Calu3 (cell line): ENCODE measurements at regions of chr4 and their contacts with region 1.

Region 1: GRCh38 chr4:170307182-170307581 is 217.4 kb upstream of the AADAT start:
- DNase-seq: no peak
- H3K4me3 Mint-ChIP-seq: no peak overlapping the region
- H3K27ac Mint-ChIP-seq: peak overlapping the region; percentile 82
- H3K4me1 Mint-ChIP-seq: peaks cover 40% of the 10 kb centered on the region
- H3K27me3 Mint-ChIP-seq: no peaks in the 10 kb centered on the region
- CTCF ChIP-seq: no peak

Region 2: GRCh38 chr4:170138580-170139194 is 168.5 kb before region 1 on chr4:
- CTCF ChIA-PET with region 1: no interaction called
- intact Hi-C with region 1: no loop called
- DNase-seq: peak; percentile 72
- H3K4me3 Mint-ChIP-seq: no peak overlapping the region
- H3K27ac Mint-ChIP-seq: no peak overlapping the region
- H3K4me1 Mint-ChIP-seq: peaks cover 6% of the 10 kb centered on the region
- H3K27me3 Mint-ChIP-seq: no peaks in the 10 kb centered on the region
- CTCF ChIP-seq: peak; percentile 49

Region 3: GRCh38 chr4:170270628-170271027 is 36.6 kb before region 1 on chr4:
- CTCF ChIA-PET with region 1: no interaction called
- intact Hi-C with region 1: loop called (anchors 5 kb)
- DNase-seq: no peak
- H3K4me3 Mint-ChIP-seq: no peak overlapping the region
- H3K27ac Mint-ChIP-seq: no peak overlapping the region
- H3K4me1 Mint-ChIP-seq: no peaks in the 10 kb centered on the region
- H3K27me3 Mint-ChIP-seq: no peaks in the 10 kb centered on the region
- CTCF ChIP-seq: no peak

Region 4: DNA sequence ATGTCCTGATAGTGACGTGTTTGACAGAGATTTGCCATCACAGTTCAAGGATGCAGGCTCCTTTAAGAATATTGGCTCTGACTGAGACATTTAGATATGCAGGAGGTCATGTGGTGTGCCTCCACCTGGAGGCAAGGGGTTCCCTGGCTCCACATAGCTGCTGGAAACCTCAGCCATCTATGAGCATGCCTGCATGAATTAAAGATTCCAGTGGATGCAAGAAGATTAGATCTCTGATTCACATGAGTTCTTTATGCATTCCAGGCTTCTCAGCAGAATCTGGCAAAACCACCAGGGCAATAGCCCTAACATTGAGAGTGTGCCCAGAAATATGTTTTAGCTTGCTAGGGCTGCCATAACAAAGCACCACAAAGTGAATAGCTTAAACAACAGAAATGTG is 81.1 kb after region 1 on chr4:
- CTCF ChIA-PET with region 1: no interaction called
- intact Hi-C with region 1: loop called (anchors 5 kb)
- DNase-seq: no peak
- H3K4me3 Mint-ChIP-seq: no peak overlapping the region
- H3K27ac Mint-ChIP-seq: no peak overlapping the region
- H3K4me1 Mint-ChIP-seq: peaks cover 15% of the 10 kb centered on the region
- H3K27me3 Mint-ChIP-seq: no peaks in the 10 kb centered on the region
- CTCF ChIP-seq: no peak

Region 5: GRCh38 chr4:170400361-170400760 is 93.2 kb after region 1 on chr4:
- CTCF ChIA-PET with region 1: no interaction called
- intact Hi-C with region 1: no loop called
- DNase-seq: no peak
- H3K4me3 Mint-ChIP-seq: no peak overlapping the region
- H3K27ac Mint-ChIP-seq: no peak overlapping the region
- H3K4me1 Mint-ChIP-seq: no peaks in the 10 kb centered on the region
- H3K27me3 Mint-ChIP-seq: no peaks in the 10 kb centered on the region
- CTCF ChIP-seq: no peak